ENCODE measurements at regions of chr3 and their contacts with region 1.

Region 1: DNA sequence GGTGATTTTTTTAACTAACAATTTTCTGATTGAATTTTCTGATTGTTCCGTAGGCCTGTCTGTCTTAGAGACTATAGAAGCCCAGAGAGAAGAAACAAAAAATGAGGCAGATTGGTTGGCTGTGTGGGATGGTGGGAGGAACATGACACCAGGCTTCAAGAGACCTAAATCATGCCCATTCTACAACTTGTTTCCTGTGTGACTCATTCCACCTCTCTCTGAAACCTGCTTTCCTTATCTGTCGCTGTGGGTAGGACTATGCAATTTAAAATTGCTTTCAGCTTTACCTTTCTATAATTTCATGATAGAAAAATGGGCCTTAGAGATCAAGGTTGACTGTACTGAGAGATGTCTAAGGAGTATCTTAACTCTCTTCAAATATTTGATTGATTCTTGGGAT is 44.5 kb downstream of the OXNAD1 start:
- DNase-seq: peak; percentile 82
- H3K4me3 ChIP-seq: no peak overlapping the region
- H3K27ac ChIP-seq: no peak overlapping the region
- H3K4me1 ChIP-seq: peaks cover 11% of the 10 kb centered on the region
- H3K27me3 ChIP-seq: no peaks in the 10 kb centered on the region
- CTCF ChIP-seq: no peak

Region 2: DNA sequence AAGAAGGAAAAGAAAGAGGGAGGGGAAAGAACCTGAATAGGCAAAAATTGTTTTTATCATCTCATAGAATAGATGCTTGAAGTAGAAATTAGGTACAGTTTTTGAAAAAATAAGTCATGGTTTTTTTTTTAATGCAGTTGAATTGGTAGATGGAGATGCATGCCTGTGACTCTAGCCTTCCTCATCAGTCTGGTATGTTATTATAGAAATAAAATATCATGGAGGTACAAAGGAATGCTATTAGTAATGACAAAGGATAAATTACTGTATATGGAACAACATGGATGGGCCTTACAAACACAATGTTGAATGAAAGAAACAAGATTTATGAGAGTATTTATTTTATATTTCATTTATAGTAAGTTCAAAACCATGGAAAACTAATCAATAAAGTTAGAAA is 297.5 kb before region 1 on chr3:
- CTCF ChIA-PET with region 1: no interaction called
- dilution Hi-C with region 1: no loop called
- in situ Hi-C with region 1: no loop called
- intact Hi-C with region 1: no loop called
- DNase-seq: peak; percentile 11
- H3K4me3 ChIP-seq: no peak overlapping the region
- H3K27ac ChIP-seq: no peak overlapping the region
- H3K4me1 ChIP-seq: no peaks in the 10 kb centered on the region
- H3K27me3 ChIP-seq: no peaks in the 10 kb centered on the region
- CTCF ChIP-seq: no peak

Region 3: DNA sequence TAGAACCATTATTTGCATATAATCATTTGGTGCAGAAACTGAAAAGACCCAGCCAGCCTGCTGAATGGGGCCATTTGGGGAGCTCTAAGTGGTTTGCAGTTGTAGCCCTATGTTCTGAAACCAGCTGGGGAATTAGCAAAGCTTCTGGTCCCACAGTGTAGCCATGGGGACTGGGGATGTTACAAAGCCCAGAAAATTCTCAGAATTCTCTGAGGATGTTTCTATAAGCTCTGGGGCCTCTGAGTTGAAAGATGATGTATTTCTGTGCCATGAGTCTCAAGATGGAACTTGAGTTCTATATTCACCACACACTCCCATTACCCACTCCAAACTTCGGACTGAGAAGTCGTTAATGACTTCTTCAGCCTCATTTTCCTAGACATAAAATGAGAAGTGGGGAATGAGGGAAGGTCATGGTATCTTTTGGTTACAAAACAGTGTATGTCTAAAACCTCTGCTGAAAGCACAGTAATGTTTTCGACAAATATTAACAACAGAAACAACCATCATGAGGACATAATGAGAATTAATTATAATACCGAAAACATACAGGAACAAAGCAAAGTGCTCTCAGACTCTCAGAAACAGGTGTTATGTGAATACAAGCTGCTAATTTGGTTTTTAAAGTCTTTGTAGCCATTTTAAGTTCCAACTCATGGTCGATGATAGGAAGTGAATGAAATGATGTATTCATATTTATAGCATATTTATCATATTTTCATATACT is 114.6 kb after region 1 on chr3:
- CTCF ChIA-PET with region 1: no interaction called
- dilution Hi-C with region 1: no loop called
- in situ Hi-C with region 1: no loop called
- intact Hi-C with region 1: no loop called
- DNase-seq: no peak
- H3K4me3 ChIP-seq: no peak overlapping the region
- H3K27ac ChIP-seq: no peak overlapping the region
- H3K4me1 ChIP-seq: no peaks in the 10 kb centered on the region
- H3K27me3 ChIP-seq: no peaks in the 10 kb centered on the region
- CTCF ChIP-seq: no peak

Region 4: GRCh38 chr3:16529264-16529663 is 219.7 kb after region 1 on chr3:
- CTCF ChIA-PET with region 1: no interaction called
- dilution Hi-C with region 1: loop called (anchors 25 kb)
- in situ Hi-C with region 1: no loop called
- intact Hi-C with region 1: no loop called
- DNase-seq: no peak
- H3K4me3 ChIP-seq: no peak overlapping the region
- H3K27ac ChIP-seq: no peak overlapping the region
- H3K4me1 ChIP-seq: no peaks in the 10 kb centered on the region
- H3K27me3 ChIP-seq: peaks cover 4% of the 10 kb centered on the region
- CTCF ChIP-seq: no peak

Measured in mammary epithelial cell (primary cell).